ENCODE measurements at regions of chr13 and their contacts with region 1.

Region 1: GRCh38 chr13:30132623-30133553 is 174.5 kb downstream of the KATNAL1 start:
- DNase-seq: peak; percentile 90
- ATAC-seq: peak; percentile 100
- H3K4me3 Mint-ChIP-seq: no peak overlapping the region
- H3K27ac Mint-ChIP-seq: no peak overlapping the region
- H3K4me1 Mint-ChIP-seq: peaks cover 3% of the 10 kb centered on the region
- H3K27me3 Mint-ChIP-seq: no peaks in the 10 kb centered on the region
- CTCF ChIP-seq: peak; percentile 69

Region 2: DNA sequence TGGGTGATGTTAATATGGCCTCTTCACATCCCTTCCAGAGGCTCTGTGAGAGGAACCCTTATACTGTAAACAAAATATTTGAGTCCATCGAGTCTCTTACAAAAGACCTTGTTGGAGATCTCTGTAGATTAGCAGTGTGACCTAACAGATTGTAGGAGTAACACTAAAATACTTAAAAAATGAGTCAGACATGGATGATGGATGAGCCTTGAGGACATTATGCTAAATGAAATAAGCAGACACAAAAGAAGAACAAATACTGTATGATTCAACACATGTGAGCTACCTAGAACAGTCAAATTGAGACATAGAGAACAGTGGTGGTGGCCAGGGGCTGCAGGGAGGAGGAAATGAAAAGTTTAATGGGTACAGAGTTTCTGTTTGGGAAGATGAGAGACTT is 130.3 kb before region 1 on chr13:
- CTCF ChIA-PET with region 1: no interaction called
- POLR2A ChIA-PET with region 1: no interaction called
- intact Hi-C with region 1: no loop called
- DNase-seq: no peak
- ATAC-seq: no peak
- H3K4me3 Mint-ChIP-seq: no peak overlapping the region
- H3K27ac Mint-ChIP-seq: no peak overlapping the region
- H3K4me1 Mint-ChIP-seq: no peaks in the 10 kb centered on the region
- H3K27me3 Mint-ChIP-seq: peaks cover 14% of the 10 kb centered on the region
- CTCF ChIP-seq: no peak

Region 3: GRCh38 chr13:30114571-30115256 is 18.2 kb before region 1 on chr13:
- CTCF ChIA-PET with region 1: interaction called, 17 read pairs
- POLR2A ChIA-PET with region 1: no interaction called
- intact Hi-C with region 1: no loop called
- DNase-seq: peak; percentile 89
- ATAC-seq: peak; percentile 95
- H3K4me3 Mint-ChIP-seq: peak overlapping the region; percentile 81
- H3K27ac Mint-ChIP-seq: no peak overlapping the region
- H3K4me1 Mint-ChIP-seq: peaks cover 25% of the 10 kb centered on the region
- H3K27me3 Mint-ChIP-seq: peaks cover 15% of the 10 kb centered on the region
- CTCF ChIP-seq: no peak

Region 4: DNA sequence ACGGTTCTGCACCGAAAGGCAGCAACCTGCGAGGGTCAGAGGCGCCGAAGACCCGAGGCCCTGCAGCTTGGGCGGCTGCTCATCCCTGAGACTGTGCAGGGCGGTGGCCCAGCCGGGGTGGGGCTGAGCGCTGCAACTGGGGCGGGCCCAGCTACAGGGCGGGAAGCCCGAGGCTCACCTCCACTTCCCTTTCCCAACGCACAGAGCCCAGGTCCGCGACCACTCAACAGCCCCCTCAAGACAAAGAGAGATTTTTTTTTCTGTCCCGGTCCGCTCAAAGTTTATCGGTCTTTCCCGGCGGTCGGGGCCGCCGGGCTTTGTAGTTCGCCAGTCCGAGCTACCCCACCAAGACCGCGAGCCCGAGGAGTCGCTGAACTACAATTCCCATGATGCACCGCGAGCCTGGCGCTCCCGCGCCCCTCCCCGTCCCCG is 173.9 kb after region 1 on chr13:
- CTCF ChIA-PET with region 1: interaction called, 3 read pairs
- POLR2A ChIA-PET with region 1: no interaction called
- intact Hi-C with region 1: loop called (anchors 5 kb)
- DNase-seq: peak; percentile 86
- ATAC-seq: peak; percentile 86
- H3K4me3 Mint-ChIP-seq: peak overlapping the region; percentile 90
- H3K27ac Mint-ChIP-seq: peak overlapping the region; percentile 85
- H3K4me1 Mint-ChIP-seq: peaks cover 72% of the 10 kb centered on the region
- H3K27me3 Mint-ChIP-seq: no peaks in the 10 kb centered on the region
- CTCF ChIP-seq: no peak

Region 5: GRCh38 chr13:30408319-30409101 is 275.6 kb after region 1 on chr13:
- CTCF ChIA-PET with region 1: interaction called, 8 read pairs
- POLR2A ChIA-PET with region 1: no interaction called
- intact Hi-C with region 1: loop called (anchors 1 kb)
- DNase-seq: peak; percentile 85
- ATAC-seq: peak; percentile 94
- H3K4me3 Mint-ChIP-seq: peak overlapping the region; percentile 62
- H3K27ac Mint-ChIP-seq: peak overlapping the region; percentile 79
- H3K4me1 Mint-ChIP-seq: peaks cover 53% of the 10 kb centered on the region
- H3K27me3 Mint-ChIP-seq: no peaks in the 10 kb centered on the region
- CTCF ChIP-seq: no peak

Region 6: GRCh38 chr13:30581582-30581981 is 448.7 kb after region 1 on chr13:
- CTCF ChIA-PET with region 1: interaction called, 27 read pairs
- POLR2A ChIA-PET with region 1: no interaction called
- intact Hi-C with region 1: loop called (anchors 1 kb)
- DNase-seq: no peak
- ATAC-seq: no peak
- H3K4me3 Mint-ChIP-seq: no peak overlapping the region
- H3K27ac Mint-ChIP-seq: no peak overlapping the region
- H3K4me1 Mint-ChIP-seq: peaks cover 9% of the 10 kb centered on the region
- H3K27me3 Mint-ChIP-seq: no peaks in the 10 kb centered on the region
- CTCF ChIP-seq: no peak

Region 7: GRCh38 chr13:30739761-30740642 is 607.1 kb after region 1 on chr13:
- CTCF ChIA-PET with region 1: no interaction called
- POLR2A ChIA-PET with region 1: interaction called, 3 read pairs
- intact Hi-C with region 1: loop called (anchors 2 kb)
- DNase-seq: no peak
- ATAC-seq: peak; percentile 26
- H3K4me3 Mint-ChIP-seq: peak overlapping the region; percentile 74
- H3K27ac Mint-ChIP-seq: peak overlapping the region; percentile 72
- H3K4me1 Mint-ChIP-seq: peaks cover 91% of the 10 kb centered on the region
- H3K27me3 Mint-ChIP-seq: no peaks in the 10 kb centered on the region
- CTCF ChIP-seq: no peak

Region 8: DNA sequence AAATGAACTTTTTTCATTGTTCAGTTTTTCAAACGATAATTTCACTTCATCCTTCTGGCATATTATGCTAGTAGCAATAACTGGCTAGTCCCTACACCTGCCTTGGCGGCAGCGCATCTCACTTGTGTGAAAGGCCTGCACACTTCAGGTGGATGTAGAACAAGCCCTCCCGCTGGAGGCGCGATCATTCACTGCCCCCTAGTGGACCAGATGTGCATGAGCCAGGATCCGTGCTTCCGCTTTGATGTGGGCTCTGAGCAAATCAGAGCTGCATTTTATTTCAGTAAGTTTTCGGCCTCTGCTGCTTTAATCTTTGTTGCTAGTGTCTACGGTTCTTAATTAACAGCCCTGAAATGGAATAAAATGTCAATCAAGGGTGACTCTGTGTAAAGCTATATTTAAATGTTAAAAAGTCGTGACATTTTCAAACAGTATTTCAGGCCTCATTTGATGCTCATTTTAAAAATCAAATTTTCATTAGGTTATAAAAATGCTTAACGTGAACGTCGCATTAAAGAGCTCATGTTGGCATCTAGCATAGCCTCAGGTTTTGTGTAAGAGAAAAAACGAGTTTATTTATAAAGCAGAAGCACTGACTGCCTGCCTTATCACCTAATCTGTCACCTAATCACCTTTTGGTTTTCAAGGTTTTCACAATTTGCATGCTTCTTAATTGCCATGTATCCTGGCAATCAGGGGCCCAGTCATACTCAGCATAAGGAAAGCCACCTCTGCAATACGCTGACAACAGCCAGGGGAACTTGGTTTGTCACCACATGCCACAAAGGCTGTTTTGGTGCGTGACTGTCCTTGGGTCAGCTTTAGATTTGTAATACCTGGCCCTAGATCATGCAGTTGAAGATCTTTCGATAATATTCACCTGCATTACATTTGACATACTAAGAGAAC is 911.7 kb after region 1 on chr13:
- CTCF ChIA-PET with region 1: interaction called, 9 read pairs
- POLR2A ChIA-PET with region 1: no interaction called
- intact Hi-C with region 1: loop called (anchors 1 kb)
- DNase-seq: peak; percentile 51
- ATAC-seq: peak; percentile 99
- H3K4me3 Mint-ChIP-seq: peak overlapping the region; percentile 4
- H3K27ac Mint-ChIP-seq: no peak overlapping the region
- H3K4me1 Mint-ChIP-seq: peaks cover 21% of the 10 kb centered on the region
- H3K27me3 Mint-ChIP-seq: peaks cover 28% of the 10 kb centered on the region
- CTCF ChIP-seq: peak; percentile 34

Region 9: GRCh38 chr13:31587698-31588266 is 1454.9 kb after region 1 on chr13:
- CTCF ChIA-PET with region 1: no interaction called
- POLR2A ChIA-PET with region 1: no interaction called
- intact Hi-C with region 1: no loop called
- DNase-seq: no peak
- ATAC-seq: no peak
- H3K4me3 Mint-ChIP-seq: no peak overlapping the region
- H3K27ac Mint-ChIP-seq: no peak overlapping the region
- H3K4me1 Mint-ChIP-seq: no peaks in the 10 kb centered on the region
- H3K27me3 Mint-ChIP-seq: no peaks in the 10 kb centered on the region
- CTCF ChIP-seq: no peak